ENCODE measurements at regions of chr7 and their contacts with region 1.

Region 1: DNA sequence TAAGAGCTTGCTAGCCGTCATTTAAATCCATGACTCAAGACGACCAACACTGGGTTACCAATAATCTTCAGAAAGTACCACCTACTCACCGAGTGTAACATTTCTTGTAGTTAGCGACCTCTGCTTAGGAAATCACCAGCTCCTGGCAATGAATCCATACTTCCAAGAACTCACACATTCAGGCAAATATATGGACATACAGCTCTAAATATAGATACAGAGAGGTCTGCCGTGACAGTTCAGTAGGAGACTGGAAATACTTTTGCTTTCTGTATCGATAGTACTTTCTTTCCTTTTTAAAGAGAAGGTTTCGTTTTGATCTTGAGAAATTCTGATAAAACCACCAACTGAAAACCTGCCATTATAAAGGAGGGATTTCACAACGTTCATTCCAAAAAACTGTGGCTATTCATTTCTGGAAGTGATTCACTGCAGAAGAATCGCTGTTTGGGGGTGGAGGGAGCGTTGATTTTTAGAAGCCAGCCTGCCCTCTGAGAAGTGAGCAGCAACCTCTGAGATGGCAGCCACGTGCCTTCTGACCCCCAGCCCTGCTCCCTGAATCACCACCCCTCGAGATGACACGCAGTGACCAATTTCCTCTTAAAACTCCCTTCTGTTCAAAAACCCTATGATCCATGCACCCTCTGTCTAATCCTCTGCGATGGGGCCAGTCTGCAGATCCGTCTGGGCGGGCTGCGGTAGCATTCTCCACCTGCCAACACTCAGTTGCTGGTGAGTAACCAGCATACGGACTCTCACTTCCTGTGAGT is 179.0 kb upstream of the KLF14 start:
- DNase-seq: peak; percentile 93
- H3K4me3 Mint-ChIP-seq: peak overlapping the region; percentile 83
- H3K27ac Mint-ChIP-seq: peak overlapping the region; percentile 94
- H3K4me1 Mint-ChIP-seq: peaks cover 91% of the 10 kb centered on the region
- H3K27me3 Mint-ChIP-seq: no peaks in the 10 kb centered on the region

Region 2: GRCh38 chr7:130721486-130722280 is 191.4 kb before region 1 on chr7:
- CTCF ChIA-PET with region 1: no interaction called
- POLR2A ChIA-PET with region 1: no interaction called
- intact Hi-C with region 1: no loop called
- DNase-seq: peak; percentile 53
- H3K4me3 Mint-ChIP-seq: no peak overlapping the region
- H3K27ac Mint-ChIP-seq: no peak overlapping the region
- H3K4me1 Mint-ChIP-seq: no peaks in the 10 kb centered on the region
- H3K27me3 Mint-ChIP-seq: peaks cover 14% of the 10 kb centered on the region

Region 3: DNA sequence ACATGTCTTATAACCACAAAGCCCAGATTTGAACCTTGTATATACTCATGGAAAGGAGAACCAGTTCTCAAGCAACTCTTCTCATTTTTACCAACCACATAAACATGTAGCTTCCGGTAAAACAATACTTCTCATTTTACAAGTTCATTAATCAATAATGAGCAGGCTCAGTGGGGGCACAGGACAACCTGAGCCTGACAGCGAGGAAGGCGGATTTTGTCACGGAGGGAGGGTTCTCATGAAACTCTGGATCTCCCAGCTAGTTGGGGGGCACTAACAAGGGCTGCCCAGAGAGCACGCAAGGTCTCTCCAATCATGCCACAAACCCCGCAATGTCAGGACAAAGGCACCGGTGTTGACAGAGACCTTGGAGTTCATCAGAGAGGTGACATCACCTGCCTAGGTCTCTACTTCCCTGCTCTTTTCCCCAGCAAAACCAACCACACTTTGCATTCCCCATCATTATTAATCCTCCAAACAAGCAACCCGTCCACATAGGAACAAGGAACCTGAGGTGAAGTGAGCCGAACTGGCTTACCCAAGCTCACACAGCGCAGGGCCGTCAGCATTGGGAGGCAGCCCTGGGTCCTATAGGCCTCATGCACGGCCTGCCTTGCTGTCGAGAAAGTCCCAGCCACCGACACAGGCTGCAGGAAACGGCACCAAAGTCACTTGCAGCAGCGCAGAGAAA is 13.1 kb after region 1 on chr7:
- CTCF ChIA-PET with region 1: interaction called, 3 read pairs
- POLR2A ChIA-PET with region 1: interaction called, 7 read pairs
- intact Hi-C with region 1: loop called (anchors 1 kb)
- DNase-seq: peak; percentile 58
- H3K4me3 Mint-ChIP-seq: peak overlapping the region; percentile 22
- H3K27ac Mint-ChIP-seq: peak overlapping the region; percentile 81
- H3K4me1 Mint-ChIP-seq: peaks cover 94% of the 10 kb centered on the region
- H3K27me3 Mint-ChIP-seq: no peaks in the 10 kb centered on the region

Region 4: DNA sequence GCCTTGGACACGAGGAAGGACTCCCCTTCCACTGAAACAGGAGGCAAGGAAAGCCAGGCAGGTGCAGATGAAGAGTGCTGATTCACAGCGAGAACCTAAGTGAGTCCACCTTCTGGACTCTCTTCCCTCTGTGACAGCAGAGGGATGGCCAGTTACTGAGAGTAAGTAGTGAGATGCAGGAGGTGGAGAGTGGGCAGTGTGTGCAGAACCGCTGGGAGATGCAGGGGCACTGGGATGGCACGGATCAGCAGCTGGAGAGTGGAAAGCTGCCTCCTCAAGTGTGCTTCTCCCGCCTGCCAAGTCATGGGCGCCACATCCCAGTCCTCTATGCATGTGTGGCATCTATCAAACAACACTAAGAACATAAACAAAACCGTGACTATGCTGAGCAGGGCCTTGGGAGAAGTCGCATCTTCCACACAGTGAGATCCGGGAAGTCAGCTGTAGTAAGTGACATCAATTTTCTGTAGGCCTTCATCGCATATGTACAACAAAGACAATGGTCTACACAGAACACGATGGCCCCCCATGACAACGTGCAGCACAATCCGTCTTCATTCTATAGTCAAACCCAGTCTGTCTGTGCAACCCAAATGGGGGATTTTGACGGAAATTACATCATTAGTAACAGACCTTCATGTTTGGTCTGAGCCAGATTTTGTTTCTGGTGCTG is 38.4 kb after region 1 on chr7:
- CTCF ChIA-PET with region 1: interaction called, 3 read pairs
- POLR2A ChIA-PET with region 1: interaction called, 10 read pairs
- intact Hi-C with region 1: no loop called
- DNase-seq: peak; percentile 56
- H3K4me3 Mint-ChIP-seq: no peak overlapping the region
- H3K27ac Mint-ChIP-seq: no peak overlapping the region
- H3K4me1 Mint-ChIP-seq: peaks cover 55% of the 10 kb centered on the region
- H3K27me3 Mint-ChIP-seq: no peaks in the 10 kb centered on the region

Region 5: GRCh38 chr7:131007394-131008330 is 94.6 kb after region 1 on chr7:
- CTCF ChIA-PET with region 1: no interaction called
- POLR2A ChIA-PET with region 1: interaction called, 5 read pairs
- intact Hi-C with region 1: loop called (anchors 1 kb)
- DNase-seq: peak; percentile 76
- H3K4me3 Mint-ChIP-seq: peak overlapping the region; percentile 55
- H3K27ac Mint-ChIP-seq: peak overlapping the region; percentile 98
- H3K4me1 Mint-ChIP-seq: peaks cover 88% of the 10 kb centered on the region
- H3K27me3 Mint-ChIP-seq: no peaks in the 10 kb centered on the region

Region 6: DNA sequence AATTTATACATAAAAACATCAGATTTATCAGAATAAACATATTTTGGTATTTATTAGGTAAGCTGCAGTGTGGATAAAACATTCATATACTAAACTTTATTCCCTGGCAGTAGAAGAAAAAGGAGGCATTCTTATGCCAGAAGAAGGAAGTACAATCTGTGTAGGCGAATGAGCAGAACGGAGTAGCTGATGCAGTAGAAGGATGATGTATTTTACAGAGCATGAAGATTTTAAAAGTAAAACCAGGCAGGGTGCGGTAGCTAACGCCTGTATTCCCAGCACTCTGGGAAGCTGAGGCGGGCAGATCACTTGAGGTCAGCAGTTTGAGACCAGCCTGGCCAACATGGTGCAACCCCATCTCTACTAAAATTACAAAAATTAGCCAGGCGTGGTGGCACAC is 119.7 kb after region 1 on chr7:
- CTCF ChIA-PET with region 1: no interaction called
- POLR2A ChIA-PET with region 1: interaction called, 7 read pairs
- intact Hi-C with region 1: loop called (anchors 1 kb)
- DNase-seq: no peak
- H3K4me3 Mint-ChIP-seq: peak overlapping the region; percentile 34
- H3K27ac Mint-ChIP-seq: peak overlapping the region; percentile 98
- H3K4me1 Mint-ChIP-seq: peaks cover 90% of the 10 kb centered on the region
- H3K27me3 Mint-ChIP-seq: no peaks in the 10 kb centered on the region

Region 7: DNA sequence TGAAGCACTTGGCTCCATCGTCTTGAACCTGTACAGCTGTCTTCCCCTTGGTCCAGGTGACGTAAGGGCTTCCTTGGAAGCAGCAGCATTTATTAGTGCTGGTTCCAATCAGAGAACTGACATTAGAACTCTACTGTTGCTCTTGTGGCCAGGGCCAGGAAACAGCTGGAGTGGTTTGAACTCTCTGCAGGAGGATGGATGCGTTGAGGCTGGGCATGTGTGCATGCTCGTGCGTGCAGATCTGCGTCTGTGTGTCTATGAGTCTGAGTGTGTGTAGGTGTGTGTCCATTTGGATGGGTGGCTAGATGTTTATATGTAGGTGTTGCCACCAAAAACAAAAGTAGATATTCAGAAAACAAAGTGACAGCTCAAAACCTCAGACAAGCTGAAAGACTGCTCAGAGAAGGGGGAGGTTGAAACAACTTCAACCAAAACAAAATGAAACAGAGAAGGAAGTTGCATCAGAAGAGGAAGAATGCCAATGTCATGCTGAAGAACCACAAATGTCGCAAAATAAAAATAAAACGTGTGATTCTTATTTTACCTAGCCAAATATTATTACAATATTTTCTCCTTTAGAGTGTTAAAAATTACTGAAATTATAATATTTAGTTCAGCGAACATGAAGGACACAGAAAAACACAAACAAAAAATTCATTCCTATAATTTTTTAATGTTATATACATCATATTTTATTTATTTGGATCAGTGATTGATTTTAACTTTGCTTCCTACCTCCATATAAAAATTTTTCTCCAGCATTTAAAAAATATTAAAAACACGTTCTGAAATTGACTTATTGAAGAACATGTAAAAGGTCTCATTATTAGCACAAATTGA is 318.6 kb after region 1 on chr7:
- CTCF ChIA-PET with region 1: no interaction called
- POLR2A ChIA-PET with region 1: no interaction called
- intact Hi-C with region 1: loop called (anchors 1 kb)
- DNase-seq: peak; percentile 81
- H3K4me3 Mint-ChIP-seq: peak overlapping the region; percentile 64
- H3K27ac Mint-ChIP-seq: peak overlapping the region; percentile 88
- H3K4me1 Mint-ChIP-seq: peaks cover 48% of the 10 kb centered on the region
- H3K27me3 Mint-ChIP-seq: no peaks in the 10 kb centered on the region

Measured in activated CD4-positive, alpha-beta memory T cell treated with anti-CD3 and anti-CD28 coated beads for 36 hours (primary cell).